ENCODE measurements at regions of chr20 and their contacts with region 1.

Region 1: GRCh38 chr20:1946762-1947534 is 46.9 kb downstream of the PDYN start:
- DNase-seq: no peak
- H3K4me3 Mint-ChIP-seq: no peak overlapping the region
- H3K27ac Mint-ChIP-seq: no peak overlapping the region
- H3K4me1 Mint-ChIP-seq: peaks cover 30% of the 10 kb centered on the region
- H3K27me3 Mint-ChIP-seq: no peaks in the 10 kb centered on the region
- CTCF ChIP-seq: no peak

Region 2: DNA sequence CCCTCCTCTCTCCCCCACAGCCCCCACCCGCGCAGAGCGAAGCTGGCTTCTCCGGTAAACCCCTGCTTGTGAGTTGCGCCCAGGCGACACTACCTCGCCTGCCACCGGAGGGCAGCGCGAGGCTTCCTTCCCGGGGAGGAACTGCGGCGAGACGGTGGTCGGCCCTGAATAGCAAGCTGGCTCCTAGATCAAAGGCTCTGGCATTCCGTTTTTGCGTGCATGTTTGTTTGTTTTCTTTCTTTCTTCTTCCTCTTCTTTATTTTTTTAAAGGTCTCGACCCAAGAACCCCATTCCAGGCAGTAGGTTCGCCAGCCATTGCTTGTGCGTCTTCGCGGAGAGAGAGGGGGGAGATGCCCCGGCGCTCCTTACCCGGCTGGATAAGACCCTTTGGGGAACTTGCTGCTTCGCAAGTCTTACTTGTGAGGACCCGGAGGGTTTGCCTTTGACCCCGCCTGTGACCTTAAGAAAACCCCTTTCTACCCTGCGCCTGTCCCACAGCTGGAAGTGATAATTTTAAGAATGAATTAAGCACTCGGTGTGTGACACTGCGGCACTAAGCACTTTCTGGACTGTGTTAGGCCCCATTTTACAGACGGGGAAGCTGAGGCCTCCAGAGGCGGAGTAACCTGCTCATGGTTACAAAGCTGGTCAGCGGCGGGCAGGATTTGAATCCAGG is 144.4 kb before region 1 on chr20:
- CTCF ChIA-PET with region 1: no interaction called
- POLR2A ChIA-PET with region 1: no interaction called
- intact Hi-C with region 1: loop called (anchors 10 kb)
- DNase-seq: peak; percentile 45
- H3K4me3 Mint-ChIP-seq: no peak overlapping the region
- H3K27ac Mint-ChIP-seq: no peak overlapping the region
- H3K4me1 Mint-ChIP-seq: peaks cover 4% of the 10 kb centered on the region
- H3K27me3 Mint-ChIP-seq: no peaks in the 10 kb centered on the region
- CTCF ChIP-seq: peak; percentile 56

Region 3: GRCh38 chr20:1860446-1860845 is 86.5 kb before region 1 on chr20:
- CTCF ChIA-PET with region 1: no interaction called
- POLR2A ChIA-PET with region 1: no interaction called
- intact Hi-C with region 1: no loop called
- DNase-seq: peak; percentile 33
- H3K4me3 Mint-ChIP-seq: no peak overlapping the region
- H3K27ac Mint-ChIP-seq: no peak overlapping the region
- H3K4me1 Mint-ChIP-seq: peaks cover 13% of the 10 kb centered on the region
- H3K27me3 Mint-ChIP-seq: no peaks in the 10 kb centered on the region
- CTCF ChIP-seq: no peak

Region 4: DNA sequence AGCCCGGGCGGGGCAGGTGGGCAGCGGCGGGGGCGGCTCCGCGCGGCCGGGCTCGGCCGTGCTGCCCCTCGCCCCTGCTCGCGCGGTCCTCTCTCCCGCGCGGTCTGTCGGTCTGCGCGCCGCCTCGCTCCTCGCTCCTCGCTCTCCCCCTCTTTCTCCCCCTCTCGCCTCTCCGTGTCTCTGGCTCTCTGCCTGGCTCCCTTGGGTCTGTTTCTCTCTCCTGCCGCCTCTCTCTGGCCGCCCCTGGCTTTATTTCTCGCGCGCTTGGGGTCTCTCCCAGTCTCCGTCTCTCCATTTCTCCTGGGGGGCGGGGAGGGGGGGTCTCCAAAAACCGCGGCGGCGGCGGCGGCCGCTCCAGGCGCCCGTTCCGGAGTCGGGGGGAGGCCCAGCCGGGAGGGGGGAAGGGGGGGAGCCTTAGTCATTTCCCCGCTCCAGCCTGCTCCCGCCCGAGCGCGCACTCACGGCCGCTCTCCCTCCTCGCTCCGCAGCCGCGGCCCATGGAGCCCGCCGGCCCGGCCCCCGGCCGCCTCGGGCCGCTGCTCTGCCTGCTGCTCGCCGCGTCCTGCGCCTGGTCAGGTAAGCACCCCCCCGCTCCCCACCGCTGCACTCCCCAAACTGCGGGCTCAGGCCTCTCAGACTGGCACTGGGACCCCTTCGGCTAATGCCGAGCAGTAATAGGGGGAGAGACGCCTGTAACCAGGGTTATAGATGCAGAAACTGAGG is 51.8 kb before region 1 on chr20 and contains the start of gene SIRPA:
- CTCF ChIA-PET with region 1: interaction called, 3 read pairs
- POLR2A ChIA-PET with region 1: interaction called, 15 read pairs
- intact Hi-C with region 1: loop called (anchors 2 kb)
- DNase-seq: peak; percentile 64
- H3K4me3 Mint-ChIP-seq: peak within 1 kb of the TSS; percentile 79
- H3K27ac Mint-ChIP-seq: peak within 1 kb of the TSS; percentile 66
- H3K4me1 Mint-ChIP-seq: peaks cover 37% of the 10 kb centered on the region
- H3K27me3 Mint-ChIP-seq: no peaks in the 10 kb centered on the region
- CTCF ChIP-seq: no peak
- total RNA-seq, gene SIRPA: 18.0 and 23.6 TPM in 2 replicates

Region 5: DNA sequence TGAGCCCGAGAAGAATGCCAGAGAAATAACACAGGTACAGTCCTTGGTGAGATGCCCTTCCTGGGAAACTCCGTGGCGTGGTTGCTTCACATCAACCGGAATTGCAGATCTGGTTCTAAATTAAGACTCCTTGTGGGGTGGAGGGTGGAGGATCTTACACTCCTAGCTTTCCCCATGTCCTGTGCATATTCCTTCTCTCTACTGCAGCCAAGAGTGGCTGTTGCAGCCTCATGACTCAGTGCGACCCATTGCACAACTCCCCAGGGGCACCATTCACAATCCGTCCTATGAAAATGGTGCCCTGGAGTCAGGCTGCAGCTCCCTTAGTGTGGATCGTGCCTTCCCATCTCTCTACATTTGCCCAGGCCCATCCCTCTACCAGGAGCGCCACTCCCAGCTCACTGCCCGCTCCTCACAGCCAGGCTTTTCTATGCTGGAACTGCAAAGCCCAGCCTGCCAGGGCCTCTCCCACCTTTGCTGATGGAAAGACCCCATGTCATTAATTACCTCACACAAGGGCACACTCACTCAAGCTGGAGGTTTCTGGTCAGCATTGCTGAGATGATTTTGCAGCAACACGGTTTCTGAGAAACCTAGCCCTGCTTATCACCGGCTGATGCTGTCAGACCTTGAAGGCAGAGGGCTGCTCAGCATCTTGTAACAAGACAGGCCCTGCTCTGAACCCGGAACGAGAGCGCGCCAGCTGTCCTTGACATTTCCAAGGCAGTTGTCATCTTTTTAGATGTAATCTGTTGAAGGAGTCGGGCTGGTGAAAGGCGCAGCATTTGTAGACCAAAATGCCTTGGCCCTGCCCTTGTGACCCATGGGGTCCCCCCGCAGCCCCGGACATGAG is 12.0 kb before region 1 on chr20:
- CTCF ChIA-PET with region 1: interaction called, 3 read pairs
- POLR2A ChIA-PET with region 1: interaction called, 63 read pairs
- intact Hi-C with region 1: loop called (anchors 1 kb)
- DNase-seq: peak; percentile 99
- H3K4me3 Mint-ChIP-seq: peak overlapping the region; percentile 43
- H3K27ac Mint-ChIP-seq: peak overlapping the region; percentile 86
- H3K4me1 Mint-ChIP-seq: peaks cover 43% of the 10 kb centered on the region
- H3K27me3 Mint-ChIP-seq: no peaks in the 10 kb centered on the region
- CTCF ChIP-seq: no peak

Region 6: GRCh38 chr20:1965520-1966351 is 18.8 kb after region 1 on chr20:
- CTCF ChIA-PET with region 1: interaction called, 20 read pairs
- POLR2A ChIA-PET with region 1: interaction called, 7 read pairs
- intact Hi-C with region 1: no loop called
- DNase-seq: peak; percentile 73
- H3K4me3 Mint-ChIP-seq: no peak overlapping the region
- H3K27ac Mint-ChIP-seq: no peak overlapping the region
- H3K4me1 Mint-ChIP-seq: no peaks in the 10 kb centered on the region
- H3K27me3 Mint-ChIP-seq: peaks cover 58% of the 10 kb centered on the region
- CTCF ChIP-seq: peak; percentile 94

Region 7: DNA sequence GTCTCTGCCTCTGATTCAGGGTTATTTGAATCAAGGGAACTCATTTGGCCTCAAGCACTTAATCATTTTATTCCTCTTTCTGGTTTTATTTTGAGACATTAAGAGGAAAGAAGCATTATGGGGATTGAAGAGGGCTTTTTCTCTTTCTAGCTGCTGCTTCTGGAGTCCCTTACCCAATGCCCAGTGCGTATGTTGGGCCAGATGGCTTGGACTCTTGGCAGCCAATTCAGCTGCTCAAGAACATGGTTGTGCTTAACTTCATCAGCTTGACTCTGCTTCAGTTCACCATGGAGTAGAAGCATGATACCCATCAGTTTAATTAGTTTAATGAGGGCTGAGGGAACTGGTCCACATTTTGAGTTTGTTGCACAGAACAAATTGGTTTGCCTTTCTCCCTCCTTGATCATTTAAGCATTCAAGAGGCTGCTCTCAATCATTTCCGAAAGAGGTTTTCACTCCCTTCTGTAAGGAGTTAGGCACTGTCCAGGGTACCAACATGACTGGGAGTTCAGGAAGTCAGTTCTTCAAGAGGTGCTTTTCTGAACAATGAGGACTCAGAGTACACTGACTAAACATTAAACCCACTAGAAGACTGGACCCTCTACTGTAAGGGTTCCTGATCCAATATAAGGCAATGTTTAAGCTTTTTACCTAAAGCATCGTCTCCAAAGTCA is 32.3 kb after region 1 on chr20:
- CTCF ChIA-PET with region 1: no interaction called
- POLR2A ChIA-PET with region 1: no interaction called
- intact Hi-C with region 1: no loop called
- DNase-seq: no peak
- H3K4me3 Mint-ChIP-seq: no peak overlapping the region
- H3K27ac Mint-ChIP-seq: no peak overlapping the region
- H3K4me1 Mint-ChIP-seq: no peaks in the 10 kb centered on the region
- H3K27me3 Mint-ChIP-seq: peaks cover 54% of the 10 kb centered on the region
- CTCF ChIP-seq: no peak

Measured in MCF 10A (cell line).